Caco-2 (cell line): ENCODE measurements at regions of chr6 and their contacts with region 1.

Region 1: DNA sequence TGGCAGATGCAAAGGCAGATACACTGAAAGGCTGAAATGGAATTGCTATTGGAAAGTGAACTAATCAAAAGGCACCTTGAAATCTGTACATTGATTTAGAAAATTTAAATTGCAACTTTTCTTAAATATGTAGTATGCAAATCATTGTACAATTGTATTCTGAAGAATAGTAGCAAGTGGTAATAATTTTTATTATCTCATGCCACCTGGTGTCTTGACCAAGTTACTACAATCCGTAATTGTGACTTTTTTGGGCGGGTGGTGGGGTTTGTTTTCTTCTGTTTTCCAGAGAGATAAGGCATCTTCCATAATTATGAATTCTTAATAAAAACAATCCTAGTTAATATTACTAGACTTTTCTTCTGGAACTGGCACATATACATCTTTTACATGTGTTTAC is 12.5 kb upstream of the BCKDHB start:
- DNase-seq: peak in 1 of 2 experiments; percentile 19
- H3K4me3 ChIP-seq: no peak overlapping the region
- H3K4me3 Mint-ChIP-seq: no peak overlapping the region
- H3K27ac Mint-ChIP-seq: no peak overlapping the region
- H3K4me1 ChIP-seq: no peaks in the 10 kb centered on the region
- H3K4me1 Mint-ChIP-seq: no peaks in the 10 kb centered on the region
- H3K27me3 ChIP-seq: no peaks in the 10 kb centered on the region
- H3K27me3 Mint-ChIP-seq: no peaks in the 10 kb centered on the region
- CTCF ChIP-seq: peak; percentile 52 to 58

Region 2: GRCh38 chr6:79869600-79870084 is 224.4 kb before region 1 on chr6:
- CTCF ChIA-PET with region 1: no interaction called
- POLR2A ChIA-PET with region 1: no interaction called
- intact Hi-C with region 1: loop called (anchors 10 kb)
- DNase-seq: peak; percentile 80 to 88
- H3K4me3 ChIP-seq: 0 out of 2 replicates have a peak overlapping the region, but pooled peaks have one; percentile 4
- H3K4me3 Mint-ChIP-seq: peak overlapping the region; percentile 42
- H3K27ac Mint-ChIP-seq: no peak overlapping the region
- H3K4me1 ChIP-seq: no peaks in the 10 kb centered on the region; the same call in 1 of the 2 replicates
- H3K4me1 Mint-ChIP-seq: peaks cover 25% of the 10 kb centered on the region
- H3K27me3 ChIP-seq: no peaks in the 10 kb centered on the region
- H3K27me3 Mint-ChIP-seq: no peaks in the 10 kb centered on the region
- CTCF ChIP-seq: peak; percentile 86 to 95

Region 3: GRCh38 chr6:79949233-79949632 is 144.8 kb before region 1 on chr6:
- CTCF ChIA-PET with region 1: interaction called, 6 read pairs
- POLR2A ChIA-PET with region 1: no interaction called
- intact Hi-C with region 1: loop called (anchors 1 kb)
- DNase-seq: peak; percentile 68 to 72
- H3K4me3 ChIP-seq: no peak overlapping the region
- H3K4me3 Mint-ChIP-seq: no peak overlapping the region
- H3K27ac Mint-ChIP-seq: no peak overlapping the region
- H3K4me1 ChIP-seq: no peaks in the 10 kb centered on the region
- H3K4me1 Mint-ChIP-seq: no peaks in the 10 kb centered on the region
- H3K27me3 ChIP-seq: no peaks in the 10 kb centered on the region
- H3K27me3 Mint-ChIP-seq: peaks cover 11% of the 10 kb centered on the region
- CTCF ChIP-seq: peak; percentile 61 to 68

Region 4: GRCh38 chr6:79984261-79984660 is 109.8 kb before region 1 on chr6:
- CTCF ChIA-PET with region 1: no interaction called
- POLR2A ChIA-PET with region 1: no interaction called
- intact Hi-C with region 1: no loop called
- DNase-seq: peak in 1 of 2 experiments; percentile 16
- H3K4me3 ChIP-seq: no peak overlapping the region
- H3K4me3 Mint-ChIP-seq: no peak overlapping the region
- H3K27ac Mint-ChIP-seq: no peak overlapping the region
- H3K4me1 ChIP-seq: peaks cover 6% of the 10 kb centered on the region; the same call in 1 of the 2 replicates
- H3K4me1 Mint-ChIP-seq: peaks cover 5% of the 10 kb centered on the region
- H3K27me3 ChIP-seq: no peaks in the 10 kb centered on the region
- H3K27me3 Mint-ChIP-seq: no peaks in the 10 kb centered on the region
- CTCF ChIP-seq: peak in 1 of 2 experiments; percentile 14

Region 5: GRCh38 chr6:80004173-80005072 is 89.6 kb before region 1 on chr6 and contains the start of gene TTK:
- CTCF ChIA-PET with region 1: no interaction called
- POLR2A ChIA-PET with region 1: no interaction called
- intact Hi-C with region 1: loop called (anchors 1 kb)
- DNase-seq: peak; percentile 94 to 95
- H3K4me3 ChIP-seq: peak within 1 kb of the TSS; percentile 93
- H3K4me3 Mint-ChIP-seq: peak within 1 kb of the TSS; percentile 86
- H3K27ac Mint-ChIP-seq: peak within 1 kb of the TSS; percentile 75
- H3K4me1 ChIP-seq: peaks cover 12% of the 10 kb centered on the region; the same call in 1 of the 2 replicates
- H3K4me1 Mint-ChIP-seq: peaks cover 9% of the 10 kb centered on the region
- H3K27me3 ChIP-seq: no peaks in the 10 kb centered on the region
- H3K27me3 Mint-ChIP-seq: no peaks in the 10 kb centered on the region
- CTCF ChIP-seq: no peak
- total RNA-seq, gene TTK: 37.4 and 40.0 TPM in 2 replicates